AG04450 (cell line): ENCODE measurements at regions of chr2 and their contacts with region 1.

Region 1: GRCh38 chr2:208240619-208241209 is 14.2 kb downstream of the IDH1 start:
- DNase-seq: no peak
- H3K4me3 ChIP-seq: no peak overlapping the region
- H3K27ac ChIP-seq: no peak overlapping the region
- H3K27me3 ChIP-seq: no peaks in the 10 kb centered on the region
- CTCF ChIP-seq: no peak

Region 2: DNA sequence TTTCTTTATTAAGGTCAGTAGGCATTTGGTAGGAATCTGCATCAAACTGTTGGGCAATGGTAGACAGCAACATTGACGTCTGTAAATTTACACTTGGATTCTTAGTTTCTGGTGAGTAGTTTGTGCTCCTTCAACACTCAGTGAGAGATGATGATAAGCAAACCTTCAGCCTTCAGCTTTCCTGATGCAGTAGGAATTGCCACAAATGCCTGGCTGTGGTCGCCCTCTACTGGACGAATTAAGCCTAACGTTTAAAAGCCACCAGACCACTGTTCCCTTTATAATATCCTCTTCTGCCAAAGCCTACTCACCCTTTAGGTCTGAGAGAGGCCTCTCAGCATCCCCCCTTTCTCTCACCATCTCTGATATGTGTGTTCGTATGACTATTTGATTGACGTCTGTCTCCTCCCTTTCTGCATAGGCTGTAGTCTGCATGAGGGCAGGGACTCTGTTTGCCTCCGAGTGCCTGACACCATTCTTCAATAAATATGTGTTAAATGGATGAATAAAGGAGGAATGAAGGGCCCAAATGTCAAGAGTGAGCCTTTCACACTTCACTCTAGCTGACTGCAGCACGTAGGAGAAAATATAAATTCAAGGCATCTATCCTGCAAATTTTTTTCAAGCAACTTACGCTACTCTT is 168.3 kb before region 1 on chr2:
- CTCF ChIA-PET with region 1: interaction called, 10 read pairs
- POLR2A ChIA-PET with region 1: no interaction called
- DNase-seq: peak; percentile 50
- H3K4me3 ChIP-seq: no peak overlapping the region
- H3K27ac ChIP-seq: no peak overlapping the region
- H3K27me3 ChIP-seq: no peaks in the 10 kb centered on the region
- CTCF ChIP-seq: peak; percentile 75